Activated B cell treated with CpG ODN at 0.5 μM for 24 hours (primary cell): ENCODE measurements at regions of chr9 and their contacts with region 1.

Region 1: GRCh38 chr9:136885950-136886578 is at the start of gene TRAF2:
- DNase-seq: peak; percentile 95
- ATAC-seq: peak; percentile 89
- H3K4me3 Mint-ChIP-seq: peak within 1 kb of the TSS; percentile 91
- H3K27ac Mint-ChIP-seq: peak within 1 kb of the TSS; percentile 88
- H3K4me1 Mint-ChIP-seq: peaks cover 44% of the 10 kb centered on the region
- H3K27me3 Mint-ChIP-seq: no peaks in the 10 kb centered on the region
- CTCF ChIP-seq: no peak
- total RNA-seq, gene TRAF2: 49.7 and 58.2 TPM in 2 replicates

Region 2: GRCh38 chr9:136807281-136808074 is 78.6 kb before region 1 on chr9 and contains the start of gene RABL6:
- CTCF ChIA-PET with region 1: no interaction called
- POLR2A ChIA-PET with region 1: interaction called, 3 read pairs
- intact Hi-C with region 1: loop called (anchors 2 kb)
- DNase-seq: peak; percentile 86
- ATAC-seq: peak; percentile 87
- H3K4me3 Mint-ChIP-seq: peak within 1 kb of the TSS; percentile 88
- H3K27ac Mint-ChIP-seq: peak within 1 kb of the TSS; percentile 87
- H3K4me1 Mint-ChIP-seq: peaks cover 31% of the 10 kb centered on the region
- H3K27me3 Mint-ChIP-seq: no peaks in the 10 kb centered on the region
- CTCF ChIP-seq: no peak
- total RNA-seq, gene RABL6: 70.1 and 75.0 TPM in 2 replicates

Region 3: DNA sequence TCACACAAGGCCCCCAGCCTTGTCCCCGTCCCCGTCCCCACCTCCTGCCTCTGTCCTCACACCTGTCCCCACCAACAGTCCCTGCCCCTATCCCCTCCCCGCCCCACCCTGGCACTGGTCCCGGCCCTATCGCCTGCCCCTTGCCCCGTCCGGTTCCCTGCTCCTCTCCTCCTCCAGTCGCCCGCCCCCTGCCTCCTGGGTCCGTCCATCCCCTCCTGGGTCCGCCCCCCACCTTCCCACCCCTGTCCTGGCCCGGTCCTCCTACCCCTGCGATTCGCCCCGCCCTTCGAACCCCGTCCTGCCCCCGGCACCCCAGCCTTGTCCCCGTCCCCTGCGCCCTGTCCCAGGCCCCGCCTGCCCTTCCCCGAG is 20.3 kb before region 1 on chr9:
- CTCF ChIA-PET with region 1: no interaction called
- POLR2A ChIA-PET with region 1: interaction called, 17 read pairs
- intact Hi-C with region 1: loop called (anchors 1 kb)
- DNase-seq: no peak
- ATAC-seq: no peak
- H3K4me3 Mint-ChIP-seq: peak overlapping the region; percentile 89
- H3K27ac Mint-ChIP-seq: peak overlapping the region; percentile 78
- H3K4me1 Mint-ChIP-seq: peaks cover 15% of the 10 kb centered on the region
- H3K27me3 Mint-ChIP-seq: no peaks in the 10 kb centered on the region
- CTCF ChIP-seq: no peak

Region 4: DNA sequence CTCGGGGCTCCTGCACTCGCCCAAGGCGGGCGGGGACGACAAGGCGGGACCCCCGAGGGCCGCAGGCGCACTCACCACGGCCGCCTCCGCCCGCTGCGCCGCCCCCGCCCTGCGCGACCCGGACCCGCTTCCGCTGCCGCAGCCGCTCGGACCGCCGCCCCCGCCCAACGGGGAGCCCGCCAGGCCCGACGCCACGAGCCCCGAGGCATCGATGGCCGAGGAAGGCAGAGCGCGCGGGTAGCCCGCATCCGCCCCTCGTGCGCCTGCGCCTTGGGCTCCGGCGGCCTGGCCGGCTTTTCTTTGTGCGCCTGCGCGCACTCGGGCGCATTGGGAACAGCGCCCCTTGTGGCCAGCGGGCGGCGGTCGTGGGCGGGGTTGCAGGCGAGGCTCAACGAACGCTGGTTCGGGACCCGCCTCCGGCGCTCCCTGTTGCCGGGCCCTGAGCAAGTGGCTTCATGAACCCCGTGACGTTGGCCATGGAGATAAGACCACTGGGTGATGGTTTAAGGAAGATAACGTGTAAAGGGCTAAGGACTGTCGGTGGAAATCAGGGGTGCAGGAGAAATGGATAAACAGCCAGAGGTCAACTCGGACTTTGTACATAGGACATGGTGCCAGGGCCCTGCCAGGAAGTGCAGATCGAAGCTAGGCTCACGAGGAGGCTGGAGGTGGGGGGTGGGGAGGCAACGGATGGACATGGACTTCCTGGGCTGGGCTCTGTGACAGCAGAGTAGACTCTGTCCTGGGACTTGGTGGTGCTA is 58.6 kb after region 1 on chr9 and contains the starts of genes C8G and FBXW5:
- CTCF ChIA-PET with region 1: interaction called, 3 read pairs
- POLR2A ChIA-PET with region 1: interaction called, 5 read pairs
- intact Hi-C with region 1: loop called (anchors 1 kb)
- DNase-seq: peak; percentile 97
- ATAC-seq: peak; percentile 90
- H3K4me3 Mint-ChIP-seq: peak within 1 kb of the TSS; percentile 80
- H3K27ac Mint-ChIP-seq: peak within 1 kb of the TSS; percentile 79
- H3K4me1 Mint-ChIP-seq: peaks cover 9% of the 10 kb centered on the region
- H3K27me3 Mint-ChIP-seq: no peaks in the 10 kb centered on the region
- CTCF ChIP-seq: peak; percentile 48
- total RNA-seq, gene C8G: 0.69 and 3.4 TPM in 2 replicates
- total RNA-seq, gene FBXW5: 81.5 and 82.1 TPM in 2 replicates